ENCODE measurements at regions of chr9 and their contacts with region 1.

Region 1: GRCh38 chr9:26856413-26857032 is 36.1 kb downstream of the CAAP1 start:
- DNase-seq: peak in 3 of 5 donors; percentile 25 to 69 (median 58)
- H3K4me3 ChIP-seq: no peak overlapping the region
- H3K27ac ChIP-seq: no peak overlapping the region
- H3K4me1 ChIP-seq: no peaks in the 10 kb centered on the region
- H3K27me3 ChIP-seq: no peaks in the 10 kb centered on the region
- CTCF ChIP-seq: peak; percentile 52

Region 2: GRCh38 chr9:26789959-26790358 is 66.6 kb before region 1 on chr9:
- intact Hi-C with region 1: loop called (anchors 10 kb)
- DNase-seq: no peak
- H3K4me3 ChIP-seq: no peak overlapping the region
- H3K27ac ChIP-seq: no peak overlapping the region
- H3K4me1 ChIP-seq: no peaks in the 10 kb centered on the region
- H3K27me3 ChIP-seq: no peaks in the 10 kb centered on the region
- CTCF ChIP-seq: no peak